Sigmoid colon (tissue), 7 donors: ENCODE measurements at regions of chr1 and their contacts with region 1.

Region 1: GRCh38 chr1:45011837-45012638 is at the start of gene UROD:
- DNase-seq: peak; percentile 96
- H3K4me3 ChIP-seq: peak within 1 kb of the TSS; percentile 65 to 100 (median 82)
- H3K27ac ChIP-seq: peak within 1 kb of the TSS; percentile 78 to 94 (median 85)
- H3K4me1 ChIP-seq: peaks cover 3 to 54% (median 50%) of the 10 kb centered on the region in 4 donors
- H3K27me3 ChIP-seq: no peaks in the 10 kb centered on the region
- CTCF ChIP-seq: no peak
- EP300 ChIP-seq: peak in 1 of 4 donors; percentile 34
- POLR2A ChIP-seq: peak in 1 of 2 donors; percentile 13
- total RNA-seq, gene UROD: 65.6 to 99.2 (median 89.1) TPM

Region 2: GRCh38 chr1:44730741-44731512 is 281.1 kb before region 1 on chr1 and contains the start of gene RNU5D-1:
- intact Hi-C with region 1: loop called (anchors 5 kb)
- DNase-seq: peak; percentile 96
- H3K4me3 ChIP-seq: peak within 1 kb of the TSS in 3 of 4 donors; percentile 13 to 20 (median 14)
- H3K27ac ChIP-seq: peak within 1 kb of the TSS; percentile 77 to 88 (median 82)
- H3K4me1 ChIP-seq: peaks cover 0 to 8% (median 4%) of the 10 kb centered on the region in 4 donors
- H3K27me3 ChIP-seq: no peaks in the 10 kb centered on the region
- CTCF ChIP-seq: peak; percentile 39 to 85 (median 68)
- EP300 ChIP-seq: peak in 2 of 4 donors; percentile 10 to 20
- POLR2A ChIP-seq: peak; percentile 95
- total RNA-seq, gene RNU5D-1: not detected

Region 3: DNA sequence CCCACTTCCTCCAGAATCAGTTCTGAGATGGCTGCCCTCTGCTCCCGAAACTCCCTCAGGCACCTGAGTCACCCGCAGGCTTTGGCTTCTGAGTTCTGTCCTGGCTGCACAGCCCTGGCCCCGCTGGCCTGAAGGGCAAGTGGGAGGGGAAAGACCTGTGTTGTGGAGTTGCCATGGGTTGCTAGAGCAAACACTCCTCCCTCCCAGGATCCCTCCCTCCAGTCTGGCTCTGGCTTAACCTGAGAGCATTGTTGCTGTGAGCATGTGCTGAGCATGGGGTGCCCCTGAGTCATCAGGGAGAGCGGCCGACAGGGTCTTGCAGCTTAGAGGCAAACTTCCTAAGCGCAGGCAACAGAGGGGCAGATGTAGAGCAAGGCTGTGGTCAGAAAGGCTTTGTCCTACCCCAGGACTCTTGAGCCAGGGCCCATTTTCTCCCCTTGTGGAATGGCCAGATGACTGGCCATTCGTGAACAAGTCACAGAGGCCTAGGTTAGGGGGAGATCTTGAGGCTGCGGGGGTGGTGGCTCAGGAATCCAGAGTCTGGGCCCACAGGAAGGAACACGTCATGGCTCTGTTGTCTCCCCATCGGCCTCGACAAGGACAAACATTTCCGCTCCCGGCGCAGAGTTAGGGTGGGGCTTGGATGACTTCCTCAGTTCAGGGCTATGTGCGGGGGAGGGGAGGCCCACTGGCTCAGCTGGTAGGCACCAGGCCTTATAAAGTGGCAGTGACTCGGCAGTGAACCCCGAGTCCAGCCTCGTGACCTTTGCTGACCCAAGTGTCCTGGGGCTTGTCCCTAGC is 204.6 kb before region 1 on chr1 and contains the start of gene DYNLT4:
- intact Hi-C with region 1: no loop called
- DNase-seq: peak; percentile 98
- H3K4me3 ChIP-seq: peak within 1 kb of the TSS in 2 of 4 donors; percentile 23 to 35
- H3K27ac ChIP-seq: peak within 1 kb of the TSS; percentile 88 to 98 (median 95)
- H3K4me1 ChIP-seq: peaks cover 0 to 79% (median 50%) of the 10 kb centered on the region in 4 donors
- H3K27me3 ChIP-seq: no peaks in the 10 kb centered on the region
- CTCF ChIP-seq: no peak
- EP300 ChIP-seq: peak in 1 of 4 donors; percentile 67
- POLR2A ChIP-seq: peak in 1 of 2 donors; percentile 11
- total RNA-seq, gene DYNLT4: 1.1 TPM in 1 of 4 donors, not detected in the others

Region 4: GRCh38 chr1:44842862-44843655 is 169.0 kb before region 1 on chr1 and contains the start of gene PTCH2:
- intact Hi-C with region 1: loop called (anchors 5 kb)
- DNase-seq: peak; percentile 93
- H3K4me3 ChIP-seq: peak within 1 kb of the TSS; percentile 54 to 77 (median 60)
- H3K27ac ChIP-seq: peak within 1 kb of the TSS; percentile 66 to 82 (median 76)
- H3K4me1 ChIP-seq: peaks cover 0 to 18% (median 6%) of the 10 kb centered on the region in 4 donors
- H3K27me3 ChIP-seq: no peaks in the 10 kb centered on the region
- CTCF ChIP-seq: no peak
- EP300 ChIP-seq: no peak
- POLR2A ChIP-seq: peak in 1 of 2 donors; percentile 17
- total RNA-seq, gene PTCH2: 0.36 to 2.8 (median 0.83) TPM

Region 5: DNA sequence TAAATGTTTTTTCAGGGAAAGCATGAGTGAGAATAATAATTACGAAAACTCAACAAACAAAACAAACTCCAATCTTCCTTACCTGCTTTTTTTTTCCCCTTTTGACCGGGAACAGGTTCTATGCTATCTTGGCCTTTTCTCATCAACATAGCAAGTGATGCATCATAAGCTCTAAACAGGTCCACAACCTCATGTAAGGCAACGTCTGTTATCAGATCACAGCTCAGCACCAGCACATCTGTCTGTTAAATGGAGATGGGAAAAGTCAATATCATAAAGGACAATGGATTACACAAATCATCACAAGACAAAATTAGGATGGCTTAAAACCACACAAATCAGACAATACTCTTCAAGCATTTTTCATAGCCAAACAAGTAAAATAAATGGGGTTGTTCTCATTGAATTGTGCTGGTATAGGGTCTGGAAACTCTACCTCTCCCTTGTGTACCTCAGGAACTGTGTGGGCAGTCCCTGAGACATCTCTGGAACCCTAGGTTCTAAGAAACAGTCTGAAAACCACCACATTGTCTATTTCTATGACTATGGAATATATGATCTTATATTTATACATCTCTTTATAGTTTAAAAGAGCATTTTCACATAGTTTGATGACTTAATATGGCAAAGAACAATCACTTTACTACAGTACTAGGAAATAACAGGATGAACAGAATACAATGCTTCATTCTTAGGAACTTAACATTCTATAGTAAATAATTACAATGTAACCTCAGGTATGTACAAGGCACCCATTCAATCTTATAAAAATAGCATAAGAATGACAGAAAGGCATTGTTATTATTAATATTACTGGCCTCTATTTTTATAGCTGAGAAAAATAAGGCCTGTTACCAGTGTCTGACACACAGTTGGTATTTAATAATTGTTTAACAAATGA is 70.4 kb before region 1 on chr1:
- intact Hi-C with region 1: no loop called
- DNase-seq: no peak
- H3K4me3 ChIP-seq: no peak overlapping the region
- H3K27ac ChIP-seq: no peak overlapping the region
- H3K4me1 ChIP-seq: peaks cover 0 to 12% (median 8%) of the 10 kb centered on the region in 4 donors
- H3K27me3 ChIP-seq: no peaks in the 10 kb centered on the region
- CTCF ChIP-seq: no peak
- EP300 ChIP-seq: no peak
- POLR2A ChIP-seq: no peak

Region 6: GRCh38 chr1:45205910-45206721 is 194.1 kb after region 1 on chr1 and contains the start of gene ZSWIM5:
- intact Hi-C with region 1: loop called (anchors 5 kb)
- DNase-seq: peak; percentile 81
- H3K4me3 ChIP-seq: peak within 1 kb of the TSS; percentile 75 to 96 (median 82)
- H3K27ac ChIP-seq: peak within 1 kb of the TSS; percentile 89 to 93 (median 92)
- H3K4me1 ChIP-seq: peaks cover 0 to 30% (median 11%) of the 10 kb centered on the region in 4 donors
- H3K27me3 ChIP-seq: no peaks in the 10 kb centered on the region
- CTCF ChIP-seq: no peak
- EP300 ChIP-seq: no peak
- POLR2A ChIP-seq: no peak
- total RNA-seq, gene ZSWIM5: 2.9 to 4.3 (median 3.3) TPM

Region 7: DNA sequence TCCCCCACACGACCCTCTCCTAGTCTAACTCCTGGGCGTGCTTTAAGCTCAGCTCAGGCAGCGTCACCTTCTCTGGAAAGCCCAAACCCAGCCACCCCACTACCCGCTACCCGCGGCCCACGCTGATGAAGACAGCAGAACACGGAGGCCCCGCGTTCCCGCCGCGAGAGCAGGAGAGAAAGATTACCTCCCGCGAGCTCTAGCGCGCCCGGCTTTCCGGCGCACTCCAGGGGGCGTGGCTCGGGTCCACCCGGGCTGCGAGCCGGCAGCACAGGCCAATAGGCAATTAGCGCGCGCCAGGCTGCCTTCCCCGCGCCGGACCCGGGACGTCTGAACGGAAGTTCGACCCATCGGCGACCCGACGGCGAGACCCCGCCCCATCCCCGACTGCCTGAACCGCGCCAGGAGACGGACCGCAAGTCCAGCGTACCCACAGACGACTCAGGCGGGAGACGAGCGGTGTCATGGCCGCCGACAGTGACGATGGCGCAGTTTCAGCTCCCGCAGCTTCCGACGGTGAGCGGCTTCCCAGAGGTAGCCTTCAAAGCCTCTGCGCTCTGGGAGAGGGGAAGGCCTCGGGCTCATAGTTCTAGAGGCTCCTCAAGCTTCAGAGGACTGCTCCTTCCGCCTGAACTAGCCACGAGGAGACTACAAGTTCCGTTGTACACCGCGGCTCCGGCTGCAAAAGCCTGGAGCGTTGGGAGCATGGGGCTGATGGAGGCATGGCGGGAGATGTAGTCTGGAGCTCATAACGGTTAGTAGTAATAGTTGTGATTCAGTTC is 327.9 kb after region 1 on chr1 and contains the starts of genes MUTYH and TOE1:
- intact Hi-C with region 1: loop called (anchors 2 kb)
- DNase-seq: peak; percentile 96
- H3K4me3 ChIP-seq: peak within 1 kb of the TSS; percentile 67 to 88 (median 76)
- H3K27ac ChIP-seq: peak within 1 kb of the TSS; percentile 92 to 98 (median 96)
- H3K4me1 ChIP-seq: peaks cover 0 to 30% (median 28%) of the 10 kb centered on the region in 4 donors
- H3K27me3 ChIP-seq: no peaks in the 10 kb centered on the region
- CTCF ChIP-seq: no peak
- EP300 ChIP-seq: no peak
- POLR2A ChIP-seq: peak; percentile 58 to 60
- total RNA-seq, gene MUTYH: 15.7 to 22.8 (median 19.2) TPM
- total RNA-seq, gene TOE1: 7.1 to 10.5 (median 7.3) TPM

Region 8: DNA sequence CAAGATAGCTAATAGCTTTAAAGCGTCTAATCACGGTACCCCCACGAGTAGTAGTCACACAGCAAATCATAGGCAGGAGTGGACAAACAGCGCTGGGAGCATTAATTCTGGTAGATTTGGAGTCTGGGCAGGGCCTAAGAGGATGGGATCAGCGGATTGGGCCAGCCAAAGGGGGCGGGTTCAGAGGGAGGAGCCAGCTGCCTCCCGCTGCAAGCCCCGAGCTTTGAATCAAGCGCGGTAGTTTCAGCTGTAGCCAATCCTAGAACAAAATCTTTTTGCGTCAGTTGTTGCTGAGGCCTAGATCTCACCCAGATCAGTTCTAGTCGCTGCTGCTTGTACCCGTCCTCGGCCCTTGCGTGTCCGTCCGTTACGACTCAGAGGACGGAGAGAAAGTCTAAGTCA is 571.2 kb after region 1 on chr1:
- intact Hi-C with region 1: loop called (anchors 10 kb)
- DNase-seq: peak; percentile 99
- H3K4me3 ChIP-seq: peak overlapping the region; percentile 79 to 98 (median 82)
- H3K27ac ChIP-seq: peak overlapping the region; percentile 92 to 98 (median 94)
- H3K4me1 ChIP-seq: peaks cover 0 to 31% (median 23%) of the 10 kb centered on the region in 4 donors
- H3K27me3 ChIP-seq: no peaks in the 10 kb centered on the region
- CTCF ChIP-seq: no peak
- EP300 ChIP-seq: no peak
- POLR2A ChIP-seq: no peak